ENCODE measurements at regions of chr14 and their contacts with region 1.

Region 1: DNA sequence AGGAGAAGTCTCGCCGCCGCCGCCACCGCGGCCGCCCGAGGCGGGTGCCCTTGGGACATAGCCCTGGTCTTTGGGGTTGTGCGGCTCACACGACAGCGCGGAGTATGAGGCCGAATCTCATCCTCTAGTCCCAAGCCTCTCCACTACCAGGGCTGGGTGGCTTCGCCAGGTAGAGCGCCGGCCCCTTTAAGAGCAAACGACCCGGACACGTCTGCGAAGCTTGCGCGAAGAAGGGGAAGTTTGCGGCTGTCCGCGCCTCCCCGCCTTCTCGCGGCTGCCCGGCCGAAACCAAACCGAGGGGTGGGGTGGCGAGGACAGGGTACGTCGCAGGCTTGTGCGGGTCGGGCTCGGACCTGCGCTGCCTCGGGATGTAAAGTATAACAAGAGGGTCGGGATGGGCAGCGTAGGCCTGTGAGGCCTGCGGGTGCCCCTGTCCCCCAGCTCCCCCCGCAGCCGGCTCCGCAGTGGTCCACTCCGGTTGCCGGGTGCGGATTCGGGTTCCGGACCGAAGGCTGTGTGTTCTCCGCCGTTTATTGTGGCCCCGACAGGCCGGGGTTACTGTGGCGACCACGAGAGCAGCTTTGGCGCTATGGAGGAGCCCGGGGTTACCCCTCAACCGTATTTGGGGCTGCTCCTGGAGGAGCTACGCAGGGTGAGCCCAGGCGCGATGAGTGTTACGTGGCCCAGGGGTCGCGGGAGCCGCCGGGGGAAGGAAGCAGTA is 33.3 kb downstream of the MIA2 start:
- DNase-seq: peak; percentile 48 to 84 (median 70)
- ATAC-seq: peak; percentile 80 to 85
- H3K4me3 Mint-ChIP-seq: peak overlapping the region; percentile 69 to 97 (median 93)
- H3K27ac Mint-ChIP-seq: peak overlapping the region; percentile 92 to 98 (median 96)
- H3K4me1 Mint-ChIP-seq: peaks cover 20 to 58% (median 51%) of the 10 kb centered on the region in 4 donors
- H3K27me3 Mint-ChIP-seq: no peaks in the 10 kb centered on the region

Region 2: DNA sequence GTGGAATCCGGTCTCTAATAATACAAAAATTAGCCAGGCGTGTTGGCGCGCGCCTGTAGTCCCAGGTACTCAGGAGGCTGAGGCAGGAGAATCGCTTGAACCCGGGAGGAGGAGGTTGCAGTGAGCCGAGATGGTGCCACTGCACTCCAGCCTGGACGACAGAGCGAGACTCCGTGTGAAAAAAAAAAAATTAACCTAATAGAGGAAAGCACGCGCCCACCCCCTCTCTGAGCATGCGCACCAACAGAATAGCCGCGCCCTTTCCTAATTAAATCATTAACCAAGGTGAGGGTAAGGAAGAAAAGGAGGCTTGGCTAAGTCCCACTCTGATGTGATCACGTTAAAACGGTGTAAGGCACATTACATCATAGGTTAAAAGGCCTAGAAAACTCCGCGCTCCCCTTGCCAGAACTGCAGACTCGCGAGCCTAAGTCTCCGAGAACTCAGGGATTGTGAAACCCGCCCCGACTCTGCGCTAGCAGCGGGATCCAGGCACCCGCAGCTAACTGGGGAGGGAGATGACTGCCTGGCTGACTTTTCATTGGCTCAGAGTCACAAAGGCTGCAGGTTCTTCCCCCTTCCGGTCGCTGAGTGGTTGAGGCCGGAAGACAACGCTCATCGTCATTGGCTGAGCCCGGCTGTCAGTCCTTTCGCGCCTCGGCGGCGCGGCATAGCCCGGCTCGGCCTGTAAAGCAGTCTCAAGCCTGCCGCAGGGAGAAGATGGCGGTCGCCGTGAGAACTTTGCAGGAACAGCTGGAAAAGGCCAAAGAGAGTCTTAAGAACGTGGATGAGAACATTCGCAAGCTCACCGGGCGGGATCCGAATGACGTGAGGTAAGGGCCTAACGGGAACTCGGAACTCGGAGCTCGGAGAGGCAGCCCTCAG is 92.2 kb before region 1 on chr14 and contains the start of gene PNN:
- POLR2A ChIA-PET with region 1: interaction called, 41 read pairs
- DNase-seq: peak; percentile 85 to 99 (median 98)
- ATAC-seq: peak; percentile 86 to 90
- H3K4me3 Mint-ChIP-seq: peak within 1 kb of the TSS; percentile 96 to 100 (median 98)
- H3K27ac Mint-ChIP-seq: peak within 1 kb of the TSS; percentile 98 to 100 (median 99)
- H3K4me1 Mint-ChIP-seq: peaks cover 14 to 54% (median 41%) of the 10 kb centered on the region in 4 donors
- H3K27me3 Mint-ChIP-seq: peaks cover 0 to 2% (median 0%) of the 10 kb centered on the region in 5 donors
- polyA plus RNA-seq, gene PNN: 15.4 to 24.2 (median 18.9) TPM

Region 3: GRCh38 chr14:39229222-39229543 is 37.8 kb before region 1 on chr14:
- POLR2A ChIA-PET with region 1: interaction called, 10 read pairs
- DNase-seq: peak in 9 of 10 donors; percentile 6 to 72 (median 40)
- ATAC-seq: peak; percentile 94 to 95
- H3K4me3 Mint-ChIP-seq: peak overlapping the region in 6 of 10 donors; percentile 1 to 30 (median 8)
- H3K27ac Mint-ChIP-seq: peak overlapping the region; percentile 60 to 88 (median 82)
- H3K4me1 Mint-ChIP-seq: peaks cover 14 to 45% (median 33%) of the 10 kb centered on the region in 4 donors
- H3K27me3 Mint-ChIP-seq: no peaks in the 10 kb centered on the region

Region 4: GRCh38 chr14:39291701-39292100 is 24.7 kb after region 1 on chr14:
- POLR2A ChIA-PET with region 1: no interaction called
- DNase-seq: no peak
- ATAC-seq: no peak
- H3K4me3 Mint-ChIP-seq: no peak overlapping the region
- H3K27ac Mint-ChIP-seq: no peak overlapping the region
- H3K4me1 Mint-ChIP-seq: peaks cover 2 to 8% (median 5%) of the 10 kb centered on the region in 4 donors
- H3K27me3 Mint-ChIP-seq: no peaks in the 10 kb centered on the region

Region 5: GRCh38 chr14:39446131-39446744 is 179.2 kb after region 1 on chr14:
- POLR2A ChIA-PET with region 1: no interaction called
- DNase-seq: no peak
- ATAC-seq: no peak
- H3K4me3 Mint-ChIP-seq: no peak overlapping the region
- H3K27ac Mint-ChIP-seq: no peak overlapping the region
- H3K4me1 Mint-ChIP-seq: peaks cover 0 to 3% (median 0%) of the 10 kb centered on the region in 4 donors
- H3K27me3 Mint-ChIP-seq: peaks cover 0 to under 1% (median 0%) of the 10 kb centered on the region in 5 donors

Measured in naive thymus-derived CD8-positive, alpha-beta T cell (primary cell).